ENCODE measurements at regions of chr4 and their contacts with region 1.

Region 1: DNA sequence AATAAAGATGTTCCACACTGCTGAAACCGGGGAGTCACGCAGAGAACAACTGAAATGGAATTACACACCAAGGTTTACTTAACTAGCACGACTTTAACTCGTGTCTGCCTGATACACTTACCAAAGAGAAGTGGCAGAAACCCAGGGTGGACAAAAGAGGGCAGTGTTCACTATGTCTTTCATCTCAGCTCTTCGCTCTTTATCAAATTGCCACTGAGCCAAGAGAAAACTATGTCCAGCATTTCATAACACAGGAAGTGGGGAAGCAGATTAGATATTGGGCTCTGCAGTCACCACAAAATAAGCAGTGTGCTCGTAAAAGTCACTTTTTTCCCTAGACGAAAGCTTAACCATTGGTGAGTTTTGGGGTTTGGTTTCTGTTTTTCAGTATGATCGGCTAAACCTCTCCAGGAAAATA is 155.7 kb downstream of the CHIC2 start:
- DNase-seq: peak; percentile 53
- ATAC-seq: no peak
- H3K4me3 ChIP-seq: peak overlapping the region in 1 of 5 experiments; percentile 27
- H3K4me3 Mint-ChIP-seq: peak overlapping the region; percentile 10
- H3K27ac ChIP-seq: no peak overlapping the region
- H3K27ac Mint-ChIP-seq: no peak overlapping the region
- H3K4me1 ChIP-seq: peaks cover 9 to 13% of the 10 kb centered on the region in 2 donors
- H3K4me1 Mint-ChIP-seq: peaks cover 12% of the 10 kb centered on the region
- H3K27me3 ChIP-seq: peaks cover 0 to 24% (median 18%) of the 10 kb centered on the region in 4 experiments
- H3K27me3 Mint-ChIP-seq: peaks cover 56% of the 10 kb centered on the region
- CTCF ChIP-seq: peak; percentile 64

Region 2: GRCh38 chr4:53929955-53930798 is 21.5 kb after region 1 on chr4:
- CTCF ChIA-PET with region 1: interaction called, 10 read pairs
- POLR2A ChIA-PET with region 1: no interaction called
- intact Hi-C with region 1: no loop called
- DNase-seq: peak; percentile 60
- ATAC-seq: no peak
- H3K4me3 ChIP-seq: no peak overlapping the region
- H3K4me3 Mint-ChIP-seq: no peak overlapping the region
- H3K27ac ChIP-seq: no peak overlapping the region
- H3K27ac Mint-ChIP-seq: no peak overlapping the region
- H3K4me1 ChIP-seq: no peaks in the 10 kb centered on the region
- H3K4me1 Mint-ChIP-seq: no peaks in the 10 kb centered on the region
- H3K27me3 ChIP-seq: peaks cover 0 to 9% (median 3%) of the 10 kb centered on the region in 4 experiments
- H3K27me3 Mint-ChIP-seq: peaks cover 22% of the 10 kb centered on the region
- CTCF ChIP-seq: peak; percentile 64

Region 3: DNA sequence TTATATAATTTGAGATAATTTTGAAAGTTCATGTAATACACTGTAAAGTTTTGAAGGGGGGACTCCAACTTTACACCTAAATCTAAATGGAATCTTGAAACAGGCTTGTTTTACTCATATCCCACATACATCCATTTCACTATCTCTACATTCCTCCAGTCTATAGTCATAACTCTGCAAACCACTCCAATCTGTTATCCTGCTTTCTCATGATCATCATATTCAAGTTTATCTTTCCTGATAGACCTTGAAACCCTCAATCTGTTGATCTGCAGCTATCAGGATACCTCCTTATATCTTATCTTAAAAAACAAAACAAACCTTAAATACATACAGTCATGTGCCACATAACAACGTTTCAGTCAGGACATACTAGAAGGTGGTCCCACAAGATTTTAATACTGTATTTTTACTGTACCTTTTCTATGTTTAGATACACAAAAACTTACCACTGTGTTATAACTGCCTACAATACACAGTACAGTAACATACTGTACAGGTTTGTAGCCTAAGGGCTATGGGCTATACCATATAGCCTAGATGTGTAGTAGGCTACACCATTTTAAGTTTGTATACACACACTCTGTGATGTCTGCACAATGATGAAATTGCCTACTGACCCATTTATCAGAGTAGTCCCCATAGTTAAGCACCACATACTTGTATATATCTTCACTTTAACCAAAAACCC is 141.7 kb after region 1 on chr4:
- CTCF ChIA-PET with region 1: no interaction called
- POLR2A ChIA-PET with region 1: no interaction called
- intact Hi-C with region 1: no loop called
- DNase-seq: no peak
- ATAC-seq: no peak
- H3K4me3 ChIP-seq: no peak overlapping the region
- H3K4me3 Mint-ChIP-seq: no peak overlapping the region
- H3K27ac ChIP-seq: no peak overlapping the region
- H3K27ac Mint-ChIP-seq: no peak overlapping the region
- H3K4me1 ChIP-seq: peaks cover 0 to 3% of the 10 kb centered on the region in 2 donors
- H3K4me1 Mint-ChIP-seq: peaks cover 24% of the 10 kb centered on the region
- H3K27me3 ChIP-seq: no peaks in the 10 kb centered on the region
- H3K27me3 Mint-ChIP-seq: no peaks in the 10 kb centered on the region
- CTCF ChIP-seq: no peak

Region 4: GRCh38 chr4:54227256-54228055 is 318.8 kb after region 1 on chr4:
- CTCF ChIA-PET with region 1: interaction called, 56 read pairs
- POLR2A ChIA-PET with region 1: no interaction called
- intact Hi-C with region 1: loop called (anchors 1 kb)
- DNase-seq: peak; percentile 47
- ATAC-seq: no peak
- H3K4me3 ChIP-seq: peak overlapping the region in 2 of 5 experiments; percentile 37 to 57
- H3K4me3 Mint-ChIP-seq: peak overlapping the region; percentile 85
- H3K27ac ChIP-seq: no peak overlapping the region
- H3K27ac Mint-ChIP-seq: no peak overlapping the region
- H3K4me1 ChIP-seq: peaks cover 55 to 67% of the 10 kb centered on the region in 2 donors
- H3K4me1 Mint-ChIP-seq: peaks cover 52% of the 10 kb centered on the region
- H3K27me3 ChIP-seq: peaks cover 0 to 89% (median 73%) of the 10 kb centered on the region in 4 experiments
- H3K27me3 Mint-ChIP-seq: peaks cover 81% of the 10 kb centered on the region
- CTCF ChIP-seq: no peak